ENCODE measurements at regions of chr2 and their contacts with region 1.

Region 1: GRCh38 chr2:156892467-156893281 is 364.8 kb upstream of the GALNT5 start:
- DNase-seq: peak; percentile 7
- ATAC-seq: peak; percentile 78
- H3K4me3 ChIP-seq: no peak overlapping the region
- H3K27ac ChIP-seq: no peak overlapping the region
- H3K4me1 ChIP-seq: peaks cover 6% of the 10 kb centered on the region; the same call in 1 of the 2 replicates
- H3K27me3 ChIP-seq: peaks cover 0 to 11% of the 10 kb centered on the region in 2 experiments; a peak in 1 of 4 replicates
- CTCF ChIP-seq: peak; percentile 45 to 57 (median 46); a peak in 5 of 6 replicates
- EP300 ChIP-seq: no peak
- POLR2A ChIP-seq: no peak
- RAD21 ChIP-seq: peak; percentile 66

Region 2: GRCh38 chr2:155368934-155369333 is 1523.7 kb before region 1 on chr2:
- CTCF ChIA-PET with region 1: interaction called, 4 read pairs
- POLR2A ChIA-PET with region 1: no interaction called
- RAD21 ChIA-PET with region 1: no interaction called
- SMC1A ChIA-PET with region 1: no interaction called
- in situ Hi-C with region 1: loop called (anchors 25 kb)
- intact Hi-C with region 1: loop called (anchors 10 kb)
- DNase-seq: no peak
- ATAC-seq: peak; percentile 64
- H3K4me3 ChIP-seq: no peak overlapping the region
- H3K27ac ChIP-seq: no peak overlapping the region
- H3K4me1 ChIP-seq: no peaks in the 10 kb centered on the region
- H3K27me3 ChIP-seq: no peaks in the 10 kb centered on the region
- CTCF ChIP-seq: peak; percentile 9 to 30 (median 14); a peak in 2 of 6 replicates
- EP300 ChIP-seq: no peak
- POLR2A ChIP-seq: no peak
- RAD21 ChIP-seq: no peak

Region 3: GRCh38 chr2:155377266-155377680 is 1515.4 kb before region 1 on chr2:
- CTCF ChIA-PET with region 1: interaction called, 3 read pairs
- POLR2A ChIA-PET with region 1: no interaction called
- RAD21 ChIA-PET with region 1: no interaction called
- SMC1A ChIA-PET with region 1: no interaction called
- in situ Hi-C with region 1: loop called (anchors 25 kb)
- intact Hi-C with region 1: loop called (anchors 10 kb)
- DNase-seq: no peak
- ATAC-seq: peak; percentile 73
- H3K4me3 ChIP-seq: no peak overlapping the region
- H3K27ac ChIP-seq: no peak overlapping the region
- H3K4me1 ChIP-seq: no peaks in the 10 kb centered on the region
- H3K27me3 ChIP-seq: no peaks in the 10 kb centered on the region
- CTCF ChIP-seq: peak in 2 of 3 experiments; percentile 10 to 17; a peak in 3 of 6 replicates
- EP300 ChIP-seq: no peak
- POLR2A ChIP-seq: no peak
- RAD21 ChIP-seq: peak; percentile 50

Region 4: GRCh38 chr2:156423674-156424282 is 468.9 kb before region 1 on chr2:
- CTCF ChIA-PET with region 1: no interaction called
- POLR2A ChIA-PET with region 1: no interaction called
- RAD21 ChIA-PET with region 1: no interaction called
- SMC1A ChIA-PET with region 1: no interaction called
- in situ Hi-C with region 1: no loop called
- intact Hi-C with region 1: no loop called
- DNase-seq: no peak
- ATAC-seq: no peak
- H3K4me3 ChIP-seq: no peak overlapping the region
- H3K27ac ChIP-seq: no peak overlapping the region
- H3K4me1 ChIP-seq: no peaks in the 10 kb centered on the region
- H3K27me3 ChIP-seq: no peaks in the 10 kb centered on the region
- CTCF ChIP-seq: no peak
- EP300 ChIP-seq: no peak
- POLR2A ChIP-seq: no peak
- RAD21 ChIP-seq: no peak

Region 5: DNA sequence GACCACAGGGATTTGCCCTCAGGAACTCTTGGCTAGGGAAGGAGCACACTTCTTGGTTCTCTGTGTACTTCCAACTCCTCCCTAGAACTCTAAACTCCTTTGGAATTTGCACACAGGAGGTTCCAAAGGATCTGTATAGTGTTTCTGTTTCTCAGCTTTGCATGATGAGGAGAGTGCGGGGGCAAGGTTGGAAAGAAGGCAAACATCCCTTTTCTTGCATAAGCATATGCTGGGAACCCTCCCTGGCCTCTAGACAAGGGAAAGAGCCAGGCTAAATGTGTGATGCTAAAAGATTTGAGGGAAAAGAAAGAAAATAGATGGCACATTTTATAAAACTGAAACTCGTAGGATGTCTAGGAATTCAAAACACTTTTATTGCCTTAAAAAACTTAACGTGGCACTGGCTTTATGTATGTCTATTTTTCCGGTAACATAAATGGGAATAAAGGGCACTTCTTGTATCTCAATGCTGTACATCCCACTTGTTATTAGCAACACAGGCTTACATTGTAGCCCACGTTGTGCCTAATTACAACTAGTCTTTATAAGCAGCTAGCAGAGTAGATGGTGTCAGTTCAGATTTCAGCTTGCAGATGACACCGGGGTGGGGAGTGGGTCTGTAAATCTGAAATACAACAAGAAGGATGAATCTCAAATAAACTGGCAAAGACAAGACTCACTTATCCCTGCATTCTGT is 290.7 kb before region 1 on chr2:
- CTCF ChIA-PET with region 1: no interaction called
- POLR2A ChIA-PET with region 1: no interaction called
- RAD21 ChIA-PET with region 1: no interaction called
- SMC1A ChIA-PET with region 1: no interaction called
- in situ Hi-C with region 1: no loop called
- intact Hi-C with region 1: loop called (anchors 10 kb)
- DNase-seq: no peak
- ATAC-seq: no peak
- H3K4me3 ChIP-seq: no peak overlapping the region
- H3K27ac ChIP-seq: no peak overlapping the region
- H3K4me1 ChIP-seq: no peaks in the 10 kb centered on the region
- H3K27me3 ChIP-seq: no peaks in the 10 kb centered on the region; a peak in 2 of 4 replicates
- CTCF ChIP-seq: no peak
- EP300 ChIP-seq: no peak
- POLR2A ChIP-seq: no peak
- RAD21 ChIP-seq: no peak

Region 6: DNA sequence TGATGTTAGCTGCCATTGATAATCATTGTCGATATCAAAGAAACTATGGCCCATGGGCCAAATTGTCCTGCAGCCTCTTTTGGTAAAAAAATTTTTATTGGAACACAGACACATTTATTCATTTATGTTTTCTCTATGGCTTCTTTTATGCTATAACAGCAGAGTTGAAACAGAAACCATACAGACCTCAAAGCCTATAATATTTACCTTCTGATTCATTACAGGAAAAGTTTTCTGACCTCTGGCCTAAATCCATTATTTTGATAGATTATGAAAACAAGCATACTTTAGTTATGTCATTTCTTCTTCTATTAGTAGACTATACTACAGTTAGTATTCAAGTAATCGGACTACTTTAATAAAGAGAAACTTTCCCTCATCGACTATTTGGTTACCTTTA is 15.1 kb after region 1 on chr2:
- CTCF ChIA-PET with region 1: no interaction called
- POLR2A ChIA-PET with region 1: no interaction called
- RAD21 ChIA-PET with region 1: no interaction called
- SMC1A ChIA-PET with region 1: no interaction called
- in situ Hi-C with region 1: no loop called
- intact Hi-C with region 1: no loop called
- DNase-seq: no peak
- ATAC-seq: no peak; the same call in 2 of the 3 replicates
- H3K4me3 ChIP-seq: no peak overlapping the region
- H3K27ac ChIP-seq: no peak overlapping the region
- H3K4me1 ChIP-seq: no peaks in the 10 kb centered on the region
- H3K27me3 ChIP-seq: no peaks in the 10 kb centered on the region
- CTCF ChIP-seq: no peak
- EP300 ChIP-seq: no peak
- POLR2A ChIP-seq: no peak
- RAD21 ChIP-seq: no peak

Region 7: DNA sequence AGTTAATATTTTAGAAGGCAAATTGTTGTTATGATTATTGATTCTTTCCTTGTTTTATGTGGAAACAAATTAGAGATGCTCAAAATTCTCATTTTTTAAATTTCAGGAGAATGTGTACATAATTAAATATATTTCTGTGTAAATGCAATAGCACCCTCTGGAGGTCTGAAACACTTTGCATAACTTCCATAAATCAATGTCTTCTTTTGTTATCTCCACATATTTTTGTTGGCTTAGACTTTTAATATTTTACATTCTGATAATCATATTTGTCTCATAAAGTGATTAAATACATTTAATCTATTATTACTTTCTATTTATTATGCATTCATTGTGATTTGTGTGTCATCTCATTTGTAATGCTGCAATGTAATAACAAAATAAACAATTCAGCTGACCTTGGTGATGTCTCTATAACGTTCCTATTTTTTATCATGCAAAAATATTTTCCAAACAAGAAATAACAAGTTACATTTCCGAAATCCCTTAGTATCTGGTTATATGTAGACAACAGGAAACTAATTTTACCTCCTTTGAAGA is 163.1 kb after region 1 on chr2:
- CTCF ChIA-PET with region 1: no interaction called
- POLR2A ChIA-PET with region 1: no interaction called
- RAD21 ChIA-PET with region 1: interaction called, 3 read pairs
- SMC1A ChIA-PET with region 1: no interaction called
- in situ Hi-C with region 1: no loop called
- intact Hi-C with region 1: loop called (anchors 5 kb)
- DNase-seq: no peak
- ATAC-seq: no peak
- H3K4me3 ChIP-seq: no peak overlapping the region
- H3K27ac ChIP-seq: no peak overlapping the region
- H3K4me1 ChIP-seq: no peaks in the 10 kb centered on the region
- H3K27me3 ChIP-seq: peaks cover 0 to 2% of the 10 kb centered on the region in 2 experiments; a peak in 1 of 4 replicates
- CTCF ChIP-seq: peak in 2 of 3 experiments; percentile 14 to 28; a peak in 3 of 6 replicates
- EP300 ChIP-seq: no peak
- POLR2A ChIP-seq: no peak
- RAD21 ChIP-seq: peak; percentile 42; the same call in 1 of the 2 replicates